ENCODE measurements at regions of chr6 and their contacts with region 1.

Region 1: GRCh38 chr6:27132532-27133280 is 114.8 kb upstream of the PRSS16 start:
- DNase-seq: peak; percentile 99
- H3K4me3 ChIP-seq: peak overlapping the region; percentile 59 to 64 (median 62)
- H3K27ac ChIP-seq: peak overlapping the region; percentile 88 to 96 (median 92)
- H3K4me1 ChIP-seq: peaks cover 14 to 28% (median 23%) of the 10 kb centered on the region in 4 donors
- H3K27me3 ChIP-seq: no peaks in the 10 kb centered on the region
- CTCF ChIP-seq: no peak
- EP300 ChIP-seq: no peak
- POLR2A ChIP-seq: peak; percentile 68

Region 2: GRCh38 chr6:26017632-26017966 is 1115.1 kb before region 1 on chr6:
- intact Hi-C with region 1: loop called (anchors 10 kb)
- DNase-seq: no peak
- H3K4me3 ChIP-seq: peak overlapping the region; percentile 45 to 54 (median 52)
- H3K27ac ChIP-seq: peak overlapping the region; percentile 78 to 83 (median 80)
- H3K4me1 ChIP-seq: peaks cover 7 to 37% (median 34%) of the 10 kb centered on the region in 4 donors
- H3K27me3 ChIP-seq: no peaks in the 10 kb centered on the region
- CTCF ChIP-seq: peak; percentile 10 to 50 (median 37)
- EP300 ChIP-seq: no peak
- POLR2A ChIP-seq: no peak

Region 3: GRCh38 chr6:26743157-26743821 is 389.4 kb before region 1 on chr6:
- intact Hi-C with region 1: no loop called
- DNase-seq: peak; percentile 57
- H3K4me3 ChIP-seq: no peak overlapping the region
- H3K27ac ChIP-seq: no peak overlapping the region
- H3K4me1 ChIP-seq: peaks cover 0 to 6% (median 0%) of the 10 kb centered on the region in 4 donors
- H3K27me3 ChIP-seq: peaks cover 0 to 52% (median 17%) of the 10 kb centered on the region in 4 donors
- CTCF ChIP-seq: no peak
- EP300 ChIP-seq: no peak
- POLR2A ChIP-seq: no peak